ENCODE measurements at regions of chr21 and their contacts with region 1.

Region 1: DNA sequence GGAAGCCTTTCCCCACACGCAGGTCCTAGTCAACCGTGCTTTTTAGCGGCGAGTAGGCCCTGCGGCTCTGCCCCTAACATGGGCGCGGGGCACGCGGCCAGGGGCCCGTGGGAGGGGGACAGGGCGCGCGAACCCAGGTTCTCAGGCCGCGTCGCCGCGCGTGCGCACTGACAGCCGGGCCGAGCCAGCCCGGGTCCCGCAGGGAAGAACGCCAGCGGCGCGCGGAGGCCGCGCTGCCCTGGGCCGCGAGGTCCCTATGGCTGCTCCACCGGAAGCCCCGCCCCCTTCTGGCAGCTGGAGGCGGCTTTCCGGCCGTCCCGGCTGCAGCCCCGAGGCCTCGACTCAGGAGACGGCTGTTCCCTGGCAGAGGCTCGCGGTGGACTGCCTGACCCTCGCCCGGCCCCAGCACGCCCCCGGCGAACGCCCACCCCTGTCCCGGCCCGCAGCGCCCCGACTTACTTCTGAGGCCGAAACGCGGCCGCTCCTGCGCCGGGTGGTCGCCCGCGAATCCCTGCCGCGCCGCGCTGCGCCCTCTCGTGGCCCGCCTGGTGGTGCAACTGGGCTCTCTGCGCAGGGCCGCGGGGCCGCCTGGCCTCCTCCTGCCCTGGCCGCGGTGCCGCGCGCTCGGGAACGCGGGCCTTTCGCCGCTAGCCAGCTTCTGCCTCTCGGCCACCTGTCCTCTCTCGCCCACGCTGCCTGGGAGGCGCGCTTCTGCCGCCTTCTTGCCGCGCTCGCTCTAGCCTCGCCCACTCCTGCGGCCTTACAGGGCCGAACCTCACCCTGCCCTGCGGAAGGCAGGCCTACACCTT is 16.6 kb upstream of the RIPPLY3 start:
- DNase-seq: peak; percentile 91 to 95 (median 94)
- H3K4me3 ChIP-seq: peak overlapping the region; percentile 32 to 75 (median 67)
- H3K27ac ChIP-seq: peak overlapping the region in 1 of 2 experiments; percentile 64
- H3K4me1 ChIP-seq: peaks cover 0 to 8% (median 5%) of the 10 kb centered on the region in 4 experiments
- H3K27me3 ChIP-seq: peaks cover 0 to 10% (median 4%) of the 10 kb centered on the region in 5 experiments

Region 2: GRCh38 chr21:36310016-36310415 is 679.9 kb before region 1 on chr21:
- CTCF ChIA-PET with region 1: no interaction called
- POLR2A ChIA-PET with region 1: no interaction called
- DNase-seq: no peak
- H3K4me3 ChIP-seq: no peak overlapping the region
- H3K27ac ChIP-seq: no peak overlapping the region
- H3K4me1 ChIP-seq: no peaks in the 10 kb centered on the region
- H3K27me3 ChIP-seq: no peaks in the 10 kb centered on the region

Region 3: DNA sequence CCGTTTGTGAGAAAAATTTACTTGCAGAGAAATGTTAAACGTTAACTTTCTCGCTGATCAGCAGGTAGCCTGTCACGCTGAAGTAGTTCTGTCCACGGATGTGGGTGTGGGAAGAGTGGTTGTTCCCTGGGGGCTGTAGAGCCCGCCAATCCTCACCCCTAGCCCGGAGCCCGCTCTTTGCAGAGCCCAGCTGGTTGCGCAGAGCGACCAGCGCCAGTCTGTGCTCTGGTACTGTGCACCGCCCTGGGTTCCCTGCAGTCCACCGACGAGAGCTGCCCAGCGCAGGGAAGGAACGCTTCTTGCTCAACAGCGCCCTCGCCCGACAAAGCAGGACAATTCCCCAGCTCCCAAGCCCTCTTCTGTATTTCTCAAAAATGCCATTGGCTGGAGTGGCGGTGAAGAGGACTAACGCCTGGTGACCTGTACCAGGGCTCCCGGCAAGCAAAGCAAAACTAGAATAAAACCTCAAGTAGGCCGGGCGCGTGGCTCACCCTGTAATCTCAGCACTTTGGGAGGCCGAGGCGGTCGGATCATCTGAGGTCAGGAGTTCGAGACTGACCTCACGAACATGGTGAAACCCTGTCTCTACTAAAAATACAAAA is 19.9 kb after region 1 on chr21:
- CTCF ChIA-PET with region 1: interaction called, 11 read pairs
- POLR2A ChIA-PET with region 1: no interaction called
- DNase-seq: peak; percentile 82 to 89 (median 85)
- H3K4me3 ChIP-seq: peak overlapping the region in 6 of 7 experiments; percentile 32 to 68 (median 55)
- H3K27ac ChIP-seq: no peak overlapping the region
- H3K4me1 ChIP-seq: peaks cover 0 to 20% (median 18%) of the 10 kb centered on the region in 4 experiments
- H3K27me3 ChIP-seq: peaks cover 4 to 48% (median 12%) of the 10 kb centered on the region in 5 experiments

Region 4: DNA sequence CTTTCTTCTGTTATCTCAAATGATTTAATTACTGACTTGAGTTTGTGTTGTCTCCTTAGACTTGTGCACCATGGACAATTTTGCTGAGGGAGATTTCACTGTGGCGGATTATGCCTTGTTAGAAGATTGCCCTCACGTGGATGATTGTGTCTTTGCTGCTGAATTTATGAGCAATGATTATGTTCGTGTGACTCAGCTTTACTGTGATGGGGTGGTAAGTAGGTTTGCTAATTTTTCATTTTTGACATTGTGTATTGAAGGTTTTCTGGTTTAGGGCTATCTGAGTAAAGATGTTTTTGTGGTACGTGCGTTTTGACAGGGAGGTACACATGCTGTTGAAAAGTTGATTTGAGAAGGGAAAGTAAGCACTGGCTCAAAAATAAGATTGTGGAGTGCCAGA is 97.3 kb after region 1 on chr21:
- CTCF ChIA-PET with region 1: interaction called, 12 read pairs
- POLR2A ChIA-PET with region 1: no interaction called
- DNase-seq: peak; percentile 59 to 79 (median 76)
- H3K4me3 ChIP-seq: no peak overlapping the region
- H3K27ac ChIP-seq: no peak overlapping the region
- H3K4me1 ChIP-seq: peaks cover 7 to 18% (median 15%) of the 10 kb centered on the region in 4 experiments
- H3K27me3 ChIP-seq: no peaks in the 10 kb centered on the region

Measured in common myeloid progenitor, CD34-positive (primary cell).